Activated CD4-positive, alpha-beta memory T cell treated with anti-CD3 and anti-CD28 coated beads for 36 hours (primary cell): ENCODE measurements at regions of chr4 and their contacts with region 1.

Region 1: GRCh38 chr4:139083956-139084803 is 68.6 kb downstream of the NOCT start:
- DNase-seq: peak; percentile 90
- H3K4me3 Mint-ChIP-seq: peak overlapping the region; percentile 98
- H3K27ac Mint-ChIP-seq: peak overlapping the region; percentile 99
- H3K4me1 Mint-ChIP-seq: peaks cover 36% of the 10 kb centered on the region
- H3K27me3 Mint-ChIP-seq: no peaks in the 10 kb centered on the region

Region 2: DNA sequence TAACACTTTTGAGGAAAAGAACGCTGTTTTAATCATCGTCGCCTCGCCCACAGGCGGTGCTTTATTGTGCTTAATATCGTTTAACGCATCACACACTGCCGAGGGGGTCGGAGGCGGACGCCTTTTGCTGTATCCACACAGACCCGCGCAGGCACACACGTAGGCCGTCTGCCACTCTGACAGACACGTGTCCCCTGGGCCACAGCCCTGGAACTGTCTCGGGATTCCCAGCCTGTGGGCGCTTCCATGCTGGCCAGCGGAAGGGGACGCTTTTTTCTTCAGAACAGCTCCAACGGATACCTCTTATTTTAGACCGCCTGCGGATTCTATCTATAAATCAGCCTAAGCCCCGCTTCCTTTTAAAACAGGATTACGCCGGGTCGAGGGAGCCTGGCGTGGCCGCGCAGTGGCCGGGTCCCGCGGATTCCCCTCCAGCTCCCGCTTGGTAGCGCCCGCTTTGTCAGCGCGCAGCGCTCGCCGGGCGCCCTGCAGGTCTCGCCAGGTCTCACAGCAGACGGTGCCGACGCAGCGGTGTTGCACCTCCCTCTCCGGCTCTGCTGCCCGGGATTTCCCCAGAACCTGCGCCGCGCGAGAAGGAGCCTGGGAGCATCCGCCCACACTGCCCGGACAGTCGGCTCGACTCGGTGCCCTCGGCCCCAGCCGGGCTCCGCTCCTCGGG is 68.8 kb before region 1 on chr4 and contains the start of gene NOCT:
- CTCF ChIA-PET with region 1: interaction called, 3 read pairs
- POLR2A ChIA-PET with region 1: interaction called, 9 read pairs
- intact Hi-C with region 1: loop called (anchors 1 kb)
- DNase-seq: peak; percentile 97
- H3K4me3 Mint-ChIP-seq: peak within 1 kb of the TSS; percentile 89
- H3K27ac Mint-ChIP-seq: peak within 1 kb of the TSS; percentile 94
- H3K4me1 Mint-ChIP-seq: peaks cover 45% of the 10 kb centered on the region
- H3K27me3 Mint-ChIP-seq: no peaks in the 10 kb centered on the region
- total RNA-seq, gene NOCT: 12.2 to 14.3 TPM

Region 3: DNA sequence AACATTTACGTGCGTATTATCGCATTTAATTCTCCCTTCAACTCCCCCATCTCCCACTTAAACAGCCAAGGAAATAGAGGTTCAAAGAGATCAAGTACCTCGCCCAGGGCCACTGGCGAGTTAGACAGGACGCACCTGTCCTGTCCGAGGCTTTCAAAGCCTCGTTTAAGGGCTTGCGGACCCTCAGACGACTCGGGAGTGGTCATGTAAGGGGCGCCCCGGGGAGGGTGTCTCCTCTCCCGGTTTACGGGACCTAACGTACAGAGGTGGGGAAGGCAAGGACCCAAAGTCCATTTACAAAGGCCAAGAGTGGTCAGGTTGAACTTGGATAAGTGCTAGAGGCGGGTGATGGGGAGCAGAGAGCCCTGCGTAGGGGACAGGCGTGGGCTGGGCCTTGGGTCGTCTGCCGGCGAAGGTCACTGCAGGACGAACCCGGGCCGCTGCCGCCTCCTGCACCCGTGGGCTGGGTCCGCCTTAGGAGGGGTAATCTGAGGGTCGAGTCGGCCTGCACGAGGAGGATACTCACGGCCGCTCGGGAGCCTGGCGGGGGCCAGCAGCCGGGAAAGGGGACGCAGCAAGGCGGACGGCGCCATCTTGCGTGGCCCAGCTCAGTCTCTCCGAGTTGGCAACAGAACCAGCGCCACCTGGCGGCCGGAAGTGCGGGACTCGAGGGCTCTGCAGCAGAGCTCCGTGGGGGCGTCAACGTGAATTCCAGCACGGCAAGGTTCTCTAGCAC is 211.2 kb after region 1 on chr4:
- CTCF ChIA-PET with region 1: interaction called, 13 read pairs
- POLR2A ChIA-PET with region 1: interaction called, 13 read pairs
- intact Hi-C with region 1: loop called (anchors 1 kb)
- DNase-seq: peak; percentile 97
- H3K4me3 Mint-ChIP-seq: peak overlapping the region; percentile 93
- H3K27ac Mint-ChIP-seq: peak overlapping the region; percentile 94
- H3K4me1 Mint-ChIP-seq: peaks cover 29% of the 10 kb centered on the region
- H3K27me3 Mint-ChIP-seq: no peaks in the 10 kb centered on the region

Region 4: GRCh38 chr4:139554893-139555704 is 470.9 kb after region 1 on chr4:
- CTCF ChIA-PET with region 1: no interaction called
- POLR2A ChIA-PET with region 1: interaction called, 4 read pairs
- intact Hi-C with region 1: loop called (anchors 1 kb)
- DNase-seq: peak; percentile 91
- H3K4me3 Mint-ChIP-seq: peak overlapping the region; percentile 95
- H3K27ac Mint-ChIP-seq: peak overlapping the region; percentile 96
- H3K4me1 Mint-ChIP-seq: peaks cover 62% of the 10 kb centered on the region
- H3K27me3 Mint-ChIP-seq: no peaks in the 10 kb centered on the region